CD4-positive, alpha-beta T cell (primary cell): ENCODE measurements at regions of chr10 and their contacts with region 1.

Region 1: GRCh38 chr10:14625192-14625631 is 149.5 kb downstream of the FAM107B start:
- DNase-seq: no peak
- ATAC-seq: no peak
- H3K4me3 ChIP-seq: no peak overlapping the region
- H3K4me3 Mint-ChIP-seq: no peak overlapping the region
- H3K27ac ChIP-seq: no peak overlapping the region
- H3K27ac Mint-ChIP-seq: no peak overlapping the region
- H3K4me1 ChIP-seq: no peaks in the 10 kb centered on the region
- H3K4me1 Mint-ChIP-seq: peaks cover 6% of the 10 kb centered on the region
- H3K27me3 ChIP-seq: no peaks in the 10 kb centered on the region
- H3K27me3 Mint-ChIP-seq: no peaks in the 10 kb centered on the region
- CTCF ChIP-seq: no peak

Region 2: GRCh38 chr10:13437026-13437555 is 1188.1 kb before region 1 on chr10:
- CTCF ChIA-PET with region 1: no interaction called
- POLR2A ChIA-PET with region 1: no interaction called
- intact Hi-C with region 1: no loop called
- DNase-seq: no peak
- ATAC-seq: no peak
- H3K4me3 ChIP-seq: no peak overlapping the region
- H3K4me3 Mint-ChIP-seq: no peak overlapping the region
- H3K27ac ChIP-seq: no peak overlapping the region
- H3K27ac Mint-ChIP-seq: no peak overlapping the region
- H3K4me1 ChIP-seq: peaks cover 14% of the 10 kb centered on the region
- H3K4me1 Mint-ChIP-seq: peaks cover 12% of the 10 kb centered on the region
- H3K27me3 ChIP-seq: peaks cover 29 to 34% of the 10 kb centered on the region in 2 experiments
- H3K27me3 Mint-ChIP-seq: peaks cover 51% of the 10 kb centered on the region
- CTCF ChIP-seq: no peak

Region 3: DNA sequence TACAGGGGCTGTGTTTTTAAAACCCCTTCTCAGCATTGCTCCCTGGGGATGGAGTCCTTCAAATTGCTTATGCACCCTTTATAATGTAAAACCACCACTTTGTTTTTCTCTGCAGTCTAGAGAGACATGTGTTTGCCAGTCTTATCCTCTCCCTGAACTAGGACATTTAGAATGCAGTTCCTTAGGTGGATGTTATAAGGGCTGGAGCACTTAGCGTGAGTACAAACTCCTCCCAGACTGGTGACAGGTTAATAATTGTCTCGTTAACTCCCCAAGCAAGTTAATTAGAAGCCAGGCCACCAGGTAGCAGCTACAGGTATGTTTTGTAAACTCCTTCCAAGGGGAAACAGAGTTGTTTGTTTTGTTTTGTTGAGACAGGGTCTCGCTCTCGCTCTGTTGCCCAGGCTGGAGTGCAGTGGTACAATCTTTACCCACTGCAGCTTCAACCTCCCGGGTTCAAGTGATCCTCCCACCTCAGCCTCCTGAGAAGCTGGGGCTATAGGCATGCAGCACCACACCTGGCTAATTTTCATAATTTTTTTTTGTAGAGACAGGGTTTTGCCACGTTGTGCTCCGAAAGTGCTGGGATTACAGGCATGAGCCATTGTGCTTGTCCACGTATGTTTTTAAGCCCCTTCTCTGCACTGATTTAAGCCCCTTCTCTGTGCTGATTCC is 49.3 kb after region 1 on chr10:
- CTCF ChIA-PET with region 1: no interaction called
- POLR2A ChIA-PET with region 1: no interaction called
- intact Hi-C with region 1: loop called in 1 of 2 experiments (anchors 5 kb)
- DNase-seq: no peak
- ATAC-seq: no peak
- H3K4me3 ChIP-seq: no peak overlapping the region
- H3K4me3 Mint-ChIP-seq: no peak overlapping the region
- H3K27ac ChIP-seq: no peak overlapping the region
- H3K27ac Mint-ChIP-seq: no peak overlapping the region
- H3K4me1 ChIP-seq: no peaks in the 10 kb centered on the region
- H3K4me1 Mint-ChIP-seq: no peaks in the 10 kb centered on the region
- H3K27me3 ChIP-seq: no peaks in the 10 kb centered on the region
- H3K27me3 Mint-ChIP-seq: no peaks in the 10 kb centered on the region
- CTCF ChIP-seq: no peak

Region 4: DNA sequence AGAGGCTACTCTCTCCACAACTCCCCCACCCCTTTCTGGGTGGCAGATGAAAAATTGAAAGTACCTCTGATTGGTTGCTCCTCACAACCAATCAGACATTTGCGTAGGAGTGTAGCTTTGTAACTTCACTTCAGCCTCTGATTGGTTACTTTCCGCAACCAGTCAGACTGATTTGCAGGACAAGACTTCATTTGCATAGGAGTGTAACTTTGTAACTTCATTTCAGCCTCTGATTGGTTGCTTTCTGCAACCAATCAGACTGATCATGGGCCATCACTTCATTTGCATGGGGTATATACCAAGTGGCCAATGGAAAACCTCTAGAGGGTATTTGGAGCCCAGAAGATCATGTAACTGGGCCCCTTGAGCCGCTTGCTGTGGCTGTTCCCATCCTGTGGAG is 187.1 kb after region 1 on chr10:
- CTCF ChIA-PET with region 1: no interaction called
- POLR2A ChIA-PET with region 1: no interaction called
- intact Hi-C with region 1: loop called in 1 of 2 experiments (anchors 5 kb)
- DNase-seq: peak in 2 of 14 experiments; percentile 7 to 12
- ATAC-seq: peak; percentile 46
- H3K4me3 ChIP-seq: no peak overlapping the region
- H3K4me3 Mint-ChIP-seq: no peak overlapping the region
- H3K27ac ChIP-seq: no peak overlapping the region
- H3K27ac Mint-ChIP-seq: no peak overlapping the region
- H3K4me1 ChIP-seq: peaks cover 6% of the 10 kb centered on the region
- H3K4me1 Mint-ChIP-seq: peaks cover 14% of the 10 kb centered on the region
- H3K27me3 ChIP-seq: no peaks in the 10 kb centered on the region
- H3K27me3 Mint-ChIP-seq: no peaks in the 10 kb centered on the region
- CTCF ChIP-seq: no peak